CD8-positive, alpha-beta T cell (primary cell): ENCODE measurements at regions of chr14 and their contacts with region 1.

Region 1: DNA sequence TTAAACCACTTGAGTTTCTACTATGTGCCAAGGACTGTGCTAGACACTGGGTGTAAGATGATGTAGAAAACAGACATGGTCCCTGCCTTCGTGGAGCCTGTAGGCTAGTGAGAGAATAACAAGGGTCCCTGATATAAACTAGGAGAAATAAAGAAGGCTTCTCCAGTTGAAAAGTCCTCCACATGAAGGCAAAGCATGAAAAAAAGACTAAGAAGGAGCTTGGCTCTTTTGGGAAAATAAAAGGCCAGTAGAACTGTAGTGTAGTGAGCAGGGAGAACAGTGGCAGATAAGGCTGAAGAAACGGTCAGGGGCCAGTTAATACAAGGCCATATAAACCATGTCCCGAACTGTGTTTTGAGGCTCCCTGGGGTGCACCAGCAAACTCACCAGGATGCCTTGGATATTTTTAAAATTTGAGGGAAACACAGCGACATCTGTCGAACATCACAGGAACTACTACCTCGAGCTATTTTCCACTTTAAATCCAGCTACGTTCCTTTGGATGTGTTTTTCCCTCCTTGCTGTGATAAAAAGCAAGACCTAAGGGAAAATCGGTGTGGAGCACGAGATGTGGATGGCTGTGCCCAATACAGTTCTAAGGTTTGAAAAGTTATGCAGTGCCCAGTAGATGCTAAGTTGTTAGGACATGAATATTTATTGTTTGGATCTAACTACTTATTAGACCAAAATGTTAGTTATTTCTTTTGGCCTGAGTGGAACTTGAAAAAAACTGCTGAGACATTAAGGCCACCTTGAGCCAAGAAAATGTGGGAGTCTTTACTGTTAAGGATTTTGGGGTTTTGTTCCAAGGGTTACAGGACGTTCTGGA is 8.5 kb upstream of the CFL2 start:
- DNase-seq: peak in 7 of 9 experiments; percentile 16 to 69 (median 34)
- ATAC-seq: peak; percentile 62
- H3K4me3 ChIP-seq: no peak overlapping the region
- H3K4me3 Mint-ChIP-seq: no peak overlapping the region
- H3K27ac ChIP-seq: no peak overlapping the region
- H3K27ac Mint-ChIP-seq: no peak overlapping the region
- H3K4me1 ChIP-seq: no peaks in the 10 kb centered on the region
- H3K4me1 Mint-ChIP-seq: peaks cover 2% of the 10 kb centered on the region
- H3K27me3 ChIP-seq: no peaks in the 10 kb centered on the region
- H3K27me3 Mint-ChIP-seq: peaks cover 2% of the 10 kb centered on the region
- CTCF ChIP-seq: peak; percentile 72

Region 2: DNA sequence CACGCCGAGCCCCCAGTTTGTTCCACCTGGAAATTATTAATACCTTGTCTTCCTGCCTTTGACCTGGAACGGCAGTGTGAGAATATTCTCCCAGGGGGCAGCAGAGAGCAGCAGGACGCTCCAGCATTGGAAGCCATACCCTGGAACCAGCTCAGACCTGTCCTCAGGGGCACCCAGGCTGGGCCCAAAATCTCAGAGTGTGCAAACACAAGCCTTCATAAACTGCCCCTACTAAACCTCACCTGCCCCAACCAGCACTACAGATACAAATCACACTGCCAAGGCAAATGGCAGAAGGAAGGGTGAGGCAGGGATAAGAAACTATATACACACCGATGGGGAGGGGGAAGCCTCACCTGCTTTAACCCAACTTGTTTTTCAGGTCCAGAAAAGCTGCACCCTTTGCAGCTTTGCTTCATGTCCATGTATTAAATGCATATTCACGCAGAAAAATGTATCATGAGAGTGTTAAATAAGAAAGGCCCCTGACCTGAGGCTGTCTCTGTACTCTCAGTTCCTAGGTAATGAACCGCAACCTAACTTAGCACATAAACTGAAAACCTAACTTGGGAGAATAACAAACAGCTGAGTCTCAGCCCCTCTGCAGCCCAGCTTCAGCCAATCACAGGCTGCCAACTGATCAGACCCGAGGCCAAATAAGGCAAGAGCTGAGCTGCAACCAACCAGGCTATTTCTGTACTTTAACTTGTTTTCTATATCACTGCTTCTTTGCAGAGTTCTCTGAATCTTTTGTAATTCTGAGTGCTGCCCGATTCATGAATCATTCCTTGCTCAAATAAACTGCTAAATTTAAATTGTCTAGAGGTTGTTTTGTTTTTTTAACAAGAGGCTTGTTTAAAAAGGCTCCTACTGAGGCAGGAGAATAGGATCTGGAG is 391.0 kb before region 1 on chr14:
- CTCF ChIA-PET with region 1: no interaction called
- POLR2A ChIA-PET with region 1: no interaction called
- intact Hi-C with region 1: loop called in 1 of 2 experiments (anchors 5 kb)
- DNase-seq: peak; percentile 29 to 68 (median 48)
- ATAC-seq: peak; percentile 64
- H3K4me3 ChIP-seq: no peak overlapping the region
- H3K4me3 Mint-ChIP-seq: no peak overlapping the region
- H3K27ac ChIP-seq: no peak overlapping the region
- H3K27ac Mint-ChIP-seq: no peak overlapping the region
- H3K4me1 ChIP-seq: no peaks in the 10 kb centered on the region
- H3K4me1 Mint-ChIP-seq: peaks cover 10% of the 10 kb centered on the region
- H3K27me3 ChIP-seq: no peaks in the 10 kb centered on the region
- H3K27me3 Mint-ChIP-seq: no peaks in the 10 kb centered on the region
- CTCF ChIP-seq: peak; percentile 64

Region 3: GRCh38 chr14:34676516-34677222 is 46.3 kb before region 1 on chr14:
- CTCF ChIA-PET with region 1: interaction called, 137 read pairs
- POLR2A ChIA-PET with region 1: no interaction called
- intact Hi-C with region 1: loop called (anchors 1 kb)
- DNase-seq: no peak
- ATAC-seq: no peak
- H3K4me3 ChIP-seq: no peak overlapping the region
- H3K4me3 Mint-ChIP-seq: no peak overlapping the region
- H3K27ac ChIP-seq: no peak overlapping the region
- H3K27ac Mint-ChIP-seq: no peak overlapping the region
- H3K4me1 ChIP-seq: no peaks in the 10 kb centered on the region
- H3K4me1 Mint-ChIP-seq: no peaks in the 10 kb centered on the region
- H3K27me3 ChIP-seq: no peaks in the 10 kb centered on the region
- H3K27me3 Mint-ChIP-seq: no peaks in the 10 kb centered on the region
- CTCF ChIP-seq: no peak

Region 4: DNA sequence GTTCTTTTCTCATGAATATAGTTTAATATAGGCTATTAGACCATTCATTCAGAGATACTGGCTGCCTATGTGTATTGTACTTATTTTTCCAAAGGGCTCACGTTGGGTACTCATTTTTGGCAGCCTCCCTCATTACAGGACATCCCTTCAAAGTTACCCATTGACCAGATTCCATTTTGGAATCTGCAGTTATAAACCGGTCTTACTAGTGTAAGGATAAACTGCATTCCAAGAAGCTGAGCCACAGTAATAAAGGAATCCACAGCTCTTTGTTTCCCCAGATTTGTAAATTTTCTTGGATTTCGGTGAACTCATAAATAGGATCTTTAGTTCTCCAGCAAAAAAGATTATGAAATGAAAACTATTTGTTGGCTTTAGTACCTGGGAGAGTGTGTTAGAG is 10.3 kb after region 1 on chr14:
- CTCF ChIA-PET with region 1: interaction called, 11 read pairs
- POLR2A ChIA-PET with region 1: interaction called, 3 read pairs
- intact Hi-C with region 1: no loop called
- DNase-seq: no peak
- ATAC-seq: no peak
- H3K4me3 ChIP-seq: no peak overlapping the region
- H3K4me3 Mint-ChIP-seq: no peak overlapping the region
- H3K27ac ChIP-seq: no peak overlapping the region
- H3K27ac Mint-ChIP-seq: no peak overlapping the region
- H3K4me1 ChIP-seq: no peaks in the 10 kb centered on the region
- H3K4me1 Mint-ChIP-seq: no peaks in the 10 kb centered on the region
- H3K27me3 ChIP-seq: no peaks in the 10 kb centered on the region
- H3K27me3 Mint-ChIP-seq: no peaks in the 10 kb centered on the region
- CTCF ChIP-seq: no peak

Region 5: GRCh38 chr14:34750670-34751069 is 27.7 kb after region 1 on chr14:
- CTCF ChIA-PET with region 1: interaction called, 12 read pairs
- POLR2A ChIA-PET with region 1: no interaction called
- intact Hi-C with region 1: no loop called
- DNase-seq: no peak
- ATAC-seq: no peak
- H3K4me3 ChIP-seq: no peak overlapping the region
- H3K4me3 Mint-ChIP-seq: no peak overlapping the region
- H3K27ac ChIP-seq: no peak overlapping the region
- H3K27ac Mint-ChIP-seq: no peak overlapping the region
- H3K4me1 ChIP-seq: no peaks in the 10 kb centered on the region
- H3K4me1 Mint-ChIP-seq: no peaks in the 10 kb centered on the region
- H3K27me3 ChIP-seq: no peaks in the 10 kb centered on the region
- H3K27me3 Mint-ChIP-seq: no peaks in the 10 kb centered on the region
- CTCF ChIP-seq: no peak